ENCODE measurements at regions of chr4 and their contacts with region 1.

Region 1: DNA sequence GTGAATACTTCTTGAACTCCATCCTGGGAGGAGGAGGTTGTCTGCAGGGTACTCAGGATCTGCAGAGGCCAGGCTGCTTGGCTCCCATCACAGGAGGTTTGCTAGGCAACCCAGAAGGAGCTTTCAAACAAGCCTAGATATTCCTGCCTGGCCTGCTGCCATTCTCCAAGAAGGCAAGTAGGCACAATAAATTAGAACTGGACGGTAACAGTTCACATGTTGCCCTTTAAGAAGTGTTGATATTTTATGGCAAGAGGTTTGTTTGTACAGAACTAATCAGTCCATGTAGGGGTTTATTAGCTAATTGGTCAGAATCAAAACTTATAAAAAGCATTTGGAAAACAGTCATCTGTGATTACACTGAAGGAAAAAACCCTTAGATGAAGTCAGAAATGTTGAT is 39.3 kb downstream of the SYNPO2 start:
- DNase-seq: no peak
- ATAC-seq: peak; percentile 55

Region 2: GRCh38 chr4:118865091-118865708 is 62.8 kb before region 1 on chr4:
- intact Hi-C with region 1: no loop called
- DNase-seq: no peak
- ATAC-seq: peak; percentile 71

Region 3: GRCh38 chr4:118941149-118941548 is 13.2 kb after region 1 on chr4:
- intact Hi-C with region 1: loop called (anchors 1 kb)
- DNase-seq: no peak
- ATAC-seq: peak; percentile 77

Measured in sciatic nerve (tissue), 2 donors.